ENCODE measurements at regions of chr12 and their contacts with region 1.

Region 1: GRCh38 chr12:118689793-118690192 is 291.5 kb upstream of the SRRM4 start:
- DNase-seq: no peak
- H3K4me3 ChIP-seq: no peak overlapping the region
- H3K27ac ChIP-seq: no peak overlapping the region
- H3K4me1 ChIP-seq: peaks cover 0 to 39% (median 24%) of the 10 kb centered on the region in 4 donors
- H3K27me3 ChIP-seq: no peaks in the 10 kb centered on the region
- CTCF ChIP-seq: no peak
- EP300 ChIP-seq: no peak
- POLR2A ChIP-seq: no peak

Region 2: DNA sequence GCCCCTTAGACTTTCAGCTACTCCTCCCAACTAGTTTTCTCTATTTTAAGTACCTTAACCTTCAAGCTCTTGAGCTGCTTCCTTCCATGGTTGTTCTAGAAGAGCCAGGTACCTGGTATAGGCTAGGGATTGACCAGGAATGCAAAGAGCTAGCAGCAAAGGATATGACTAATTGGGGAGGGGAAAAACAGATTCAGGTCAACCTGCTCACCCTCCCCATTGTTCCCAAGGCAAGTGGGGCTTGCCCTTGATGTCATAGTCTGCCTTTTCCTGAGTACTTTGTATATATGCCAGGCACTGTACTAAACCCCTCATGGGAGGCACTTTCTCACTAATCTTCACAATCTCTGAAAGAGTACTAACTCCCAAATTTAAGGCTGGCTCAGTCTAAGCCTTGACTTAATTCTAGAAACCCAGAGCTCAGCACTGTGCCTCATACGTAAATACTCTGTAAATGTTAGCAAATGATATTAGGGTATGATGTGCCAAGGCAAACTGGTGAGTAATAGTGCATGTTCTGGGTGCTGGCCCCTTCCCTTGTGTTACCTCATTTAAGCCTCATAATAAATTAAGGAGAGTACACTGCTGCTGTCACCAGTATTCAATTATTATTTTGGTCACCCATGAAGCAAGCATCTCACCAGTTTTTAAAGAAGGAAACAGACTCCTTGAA is 271.3 kb before region 1 on chr12:
- intact Hi-C with region 1: loop called (anchors 10 kb)
- DNase-seq: no peak
- H3K4me3 ChIP-seq: no peak overlapping the region
- H3K27ac ChIP-seq: no peak overlapping the region
- H3K4me1 ChIP-seq: no peaks in the 10 kb centered on the region
- H3K27me3 ChIP-seq: no peaks in the 10 kb centered on the region
- CTCF ChIP-seq: no peak
- EP300 ChIP-seq: no peak
- POLR2A ChIP-seq: no peak

Region 3: GRCh38 chr12:118488034-118488433 is 201.8 kb before region 1 on chr12:
- intact Hi-C with region 1: loop called (anchors 5 kb)
- DNase-seq: peak; percentile 74
- H3K4me3 ChIP-seq: no peak overlapping the region
- H3K27ac ChIP-seq: peak overlapping the region in 3 of 4 donors; percentile 56 to 75 (median 71)
- H3K4me1 ChIP-seq: peaks cover 0 to 26% (median 15%) of the 10 kb centered on the region in 4 donors
- H3K27me3 ChIP-seq: no peaks in the 10 kb centered on the region
- CTCF ChIP-seq: no peak
- EP300 ChIP-seq: peak in 2 of 4 donors; percentile 46 to 79
- POLR2A ChIP-seq: no peak

Region 4: DNA sequence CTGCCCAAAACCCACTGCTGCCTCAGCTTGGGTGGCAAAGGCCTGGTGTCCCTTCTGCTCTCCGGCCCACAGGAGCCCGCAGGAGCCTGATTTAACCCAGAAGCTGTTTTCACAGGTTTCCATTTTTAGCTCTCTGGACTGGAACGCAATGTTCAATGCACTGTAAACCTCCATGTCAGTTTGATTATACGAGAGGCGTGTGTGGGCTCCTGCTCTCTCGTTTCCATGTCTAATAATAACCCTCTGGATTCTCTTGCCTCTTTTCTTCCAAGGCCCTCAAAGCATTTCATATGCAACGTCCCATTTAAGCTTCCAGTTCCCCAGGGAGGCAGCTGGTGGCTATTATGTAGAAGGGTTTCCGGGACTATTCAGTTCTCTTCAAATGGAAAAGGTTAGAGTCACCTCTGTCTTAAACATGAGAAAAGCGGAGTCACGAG is 152.3 kb before region 1 on chr12:
- intact Hi-C with region 1: loop called (anchors 2 kb)
- DNase-seq: peak; percentile 88
- H3K4me3 ChIP-seq: no peak overlapping the region
- H3K27ac ChIP-seq: peak overlapping the region; percentile 81 to 93 (median 89)
- H3K4me1 ChIP-seq: peaks cover 0 to 48% (median 40%) of the 10 kb centered on the region in 4 donors
- H3K27me3 ChIP-seq: no peaks in the 10 kb centered on the region
- CTCF ChIP-seq: no peak
- EP300 ChIP-seq: peak; percentile 98 to 100 (median 99)
- POLR2A ChIP-seq: no peak

Region 5: DNA sequence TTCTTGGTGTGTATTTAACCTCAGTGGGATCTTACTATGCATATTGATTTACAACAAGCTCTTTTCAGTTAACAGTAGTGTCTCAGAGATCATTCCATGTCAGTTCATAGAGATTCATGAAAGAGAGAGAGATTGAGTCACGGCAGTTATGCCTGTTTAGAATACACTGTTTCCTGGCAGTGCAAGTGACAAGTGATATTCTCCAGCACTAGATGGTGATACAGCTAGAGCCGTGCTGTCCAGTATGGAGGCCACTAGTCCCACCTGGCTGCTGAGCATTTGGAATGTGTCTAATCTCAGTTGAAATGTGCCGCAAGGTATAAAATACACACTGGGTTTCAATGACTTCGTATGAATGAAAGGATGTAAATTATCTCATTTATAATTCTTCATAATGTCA is 129.1 kb before region 1 on chr12:
- intact Hi-C with region 1: loop called (anchors 5 kb)
- DNase-seq: peak; percentile 79
- H3K4me3 ChIP-seq: no peak overlapping the region
- H3K27ac ChIP-seq: peak overlapping the region in 2 of 4 donors; percentile 19 to 30
- H3K4me1 ChIP-seq: peaks cover 0 to 27% (median 16%) of the 10 kb centered on the region in 4 donors
- H3K27me3 ChIP-seq: no peaks in the 10 kb centered on the region
- CTCF ChIP-seq: no peak
- EP300 ChIP-seq: peak in 3 of 4 donors; percentile 49 to 86 (median 60)
- POLR2A ChIP-seq: no peak

Region 6: DNA sequence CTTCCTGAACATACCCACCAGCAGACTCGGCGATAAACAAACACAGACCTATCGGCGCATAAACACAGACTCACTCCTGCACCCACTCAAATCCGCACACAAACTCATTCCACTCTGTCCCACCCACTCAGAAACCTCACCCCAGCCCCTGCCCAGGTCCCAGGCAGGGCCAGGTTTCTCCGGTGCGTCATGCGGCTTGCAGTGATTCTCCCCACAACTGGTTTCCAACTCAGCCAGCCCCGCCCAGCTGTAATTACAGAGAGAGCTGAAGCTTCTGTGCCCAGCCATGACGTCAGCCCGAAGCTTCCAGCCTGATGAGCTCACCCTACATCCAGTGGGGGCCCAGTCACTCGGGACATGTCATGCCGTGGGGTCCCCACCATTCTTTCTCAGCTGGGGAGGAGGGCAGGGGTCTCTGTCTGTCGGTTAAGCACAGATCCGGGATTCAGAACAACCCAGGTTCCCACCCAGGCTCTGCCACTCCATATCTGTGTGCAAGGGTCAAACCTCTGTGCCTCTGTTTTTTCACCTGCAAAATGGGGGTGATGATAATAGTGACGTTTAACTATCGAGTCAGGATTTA is 486.6 kb after region 1 on chr12:
- intact Hi-C with region 1: loop called (anchors 10 kb)
- DNase-seq: peak; percentile 99
- H3K4me3 ChIP-seq: peak overlapping the region; percentile 20 to 55 (median 40)
- H3K27ac ChIP-seq: peak overlapping the region; percentile 91 to 99 (median 96)
- H3K4me1 ChIP-seq: peaks cover 0 to 19% (median 16%) of the 10 kb centered on the region in 4 donors
- H3K27me3 ChIP-seq: no peaks in the 10 kb centered on the region
- CTCF ChIP-seq: no peak
- EP300 ChIP-seq: peak in 2 of 4 donors; percentile 63 to 92
- POLR2A ChIP-seq: peak in 1 of 2 donors; percentile 41

Region 7: DNA sequence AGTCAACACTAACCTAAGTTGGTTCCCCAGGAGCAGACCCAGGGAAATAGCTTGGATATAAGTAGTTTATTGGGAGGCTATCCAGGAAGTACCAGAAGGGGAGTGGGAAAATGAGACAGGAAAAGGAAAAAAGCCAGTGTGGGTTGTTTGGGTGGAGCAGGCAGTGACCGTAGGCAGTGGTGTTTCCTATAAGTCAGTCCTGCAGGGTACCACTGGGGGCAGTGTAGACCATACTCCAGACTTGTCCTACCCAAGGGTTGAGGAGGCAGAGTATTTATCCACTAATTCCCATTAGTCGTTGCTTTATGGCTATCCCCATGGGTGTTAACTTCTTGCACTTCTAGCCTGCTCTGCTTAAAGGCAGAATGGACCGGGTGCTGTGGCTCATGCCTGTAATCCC is 638.3 kb after region 1 on chr12:
- intact Hi-C with region 1: loop called (anchors 5 kb)
- DNase-seq: peak; percentile 69
- H3K4me3 ChIP-seq: no peak overlapping the region
- H3K27ac ChIP-seq: peak overlapping the region; percentile 80 to 82 (median 82)
- H3K4me1 ChIP-seq: peaks cover 0 to 50% (median 45%) of the 10 kb centered on the region in 4 donors
- H3K27me3 ChIP-seq: no peaks in the 10 kb centered on the region
- CTCF ChIP-seq: peak in 3 of 4 experiments; percentile 21 to 40 (median 25)
- EP300 ChIP-seq: no peak
- POLR2A ChIP-seq: no peak

Measured in sigmoid colon (tissue), 7 donors.